Activated CD4-positive, alpha-beta T cell treated with anti-CD3 and anti-CD28 coated beads, Interleukin-2, amount 10 ng/mL, durations not matched to agents 24 days and 14 days (primary cell): ENCODE measurements at regions of chrX and their contacts with region 1.

Region 1: DNA sequence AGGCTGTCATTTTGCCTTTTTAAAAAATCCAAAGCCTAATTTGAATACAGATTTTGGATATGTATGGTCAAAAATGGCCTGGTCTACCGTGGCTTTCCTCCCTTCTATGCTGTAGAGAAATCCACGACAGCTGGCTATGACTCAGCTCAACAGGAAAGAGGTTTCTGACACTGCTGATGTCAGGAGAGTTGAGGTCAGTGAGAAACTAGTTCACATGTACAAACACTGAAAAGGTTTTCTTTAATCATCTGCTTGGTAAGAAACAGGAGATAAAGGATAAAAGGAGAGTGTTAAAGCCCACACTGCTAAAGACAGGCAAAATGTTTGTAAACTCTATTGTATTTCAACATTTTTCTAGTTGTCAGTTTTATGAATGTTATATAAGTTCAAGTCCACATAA is 113.9 kb downstream of the NYX start:
- DNase-seq: peak; percentile 78
- H3K4me3 Mint-ChIP-seq: peak overlapping the region; percentile 8
- H3K27ac Mint-ChIP-seq: peak overlapping the region; percentile 64
- H3K4me1 Mint-ChIP-seq: peaks cover 26% of the 10 kb centered on the region
- H3K27me3 Mint-ChIP-seq: no peaks in the 10 kb centered on the region

Region 2: GRCh38 chrX:41512394-41512793 is 48.7 kb before region 1 on chrX:
- intact Hi-C with region 1: loop called (anchors 5 kb)
- DNase-seq: peak; percentile 77
- H3K4me3 Mint-ChIP-seq: peak overlapping the region; percentile 38
- H3K27ac Mint-ChIP-seq: peak overlapping the region; percentile 80
- H3K4me1 Mint-ChIP-seq: peaks cover 22% of the 10 kb centered on the region
- H3K27me3 Mint-ChIP-seq: no peaks in the 10 kb centered on the region

Region 3: DNA sequence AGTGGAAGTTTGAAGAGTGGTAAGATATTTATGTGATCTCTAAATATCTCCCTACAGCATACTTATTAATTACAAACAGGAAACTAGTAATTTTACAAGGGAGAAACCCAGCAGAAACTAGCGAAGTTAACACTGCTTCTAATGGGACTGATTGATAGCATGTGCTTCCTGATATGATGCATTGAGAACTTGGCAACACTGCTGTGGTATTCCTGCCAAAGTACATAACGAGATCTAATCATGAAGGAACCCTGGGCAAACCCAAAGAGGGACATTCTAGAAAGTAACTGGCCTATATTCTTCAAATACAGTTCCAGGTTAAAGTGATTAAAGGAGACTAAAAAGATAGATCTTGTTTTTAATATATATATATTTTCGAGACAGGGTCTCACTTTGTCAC is 123.1 kb after region 1 on chrX:
- intact Hi-C with region 1: no loop called
- DNase-seq: no peak
- H3K4me3 Mint-ChIP-seq: no peak overlapping the region
- H3K27ac Mint-ChIP-seq: no peak overlapping the region
- H3K4me1 Mint-ChIP-seq: peaks cover 13% of the 10 kb centered on the region
- H3K27me3 Mint-ChIP-seq: no peaks in the 10 kb centered on the region

Region 4: GRCh38 chrX:41734530-41734929 is 173.5 kb after region 1 on chrX:
- intact Hi-C with region 1: loop called (anchors 1 kb)
- DNase-seq: peak; percentile 58
- H3K4me3 Mint-ChIP-seq: peak overlapping the region; percentile 34
- H3K27ac Mint-ChIP-seq: peak overlapping the region; percentile 85
- H3K4me1 Mint-ChIP-seq: peaks cover 25% of the 10 kb centered on the region
- H3K27me3 Mint-ChIP-seq: no peaks in the 10 kb centered on the region

Region 5: GRCh38 chrX:41759817-41760216 is 198.8 kb after region 1 on chrX:
- intact Hi-C with region 1: loop called (anchors 1 kb)
- DNase-seq: peak; percentile 64
- H3K4me3 Mint-ChIP-seq: no peak overlapping the region
- H3K27ac Mint-ChIP-seq: no peak overlapping the region
- H3K4me1 Mint-ChIP-seq: peaks cover 3% of the 10 kb centered on the region
- H3K27me3 Mint-ChIP-seq: no peaks in the 10 kb centered on the region

Region 6: GRCh38 chrX:42943051-42943974 is 1382.3 kb after region 1 on chrX:
- intact Hi-C with region 1: loop called (anchors 10 kb)
- DNase-seq: peak; percentile 78
- H3K4me3 Mint-ChIP-seq: peak overlapping the region; percentile 64
- H3K27ac Mint-ChIP-seq: peak overlapping the region; percentile 90
- H3K4me1 Mint-ChIP-seq: peaks cover 52% of the 10 kb centered on the region
- H3K27me3 Mint-ChIP-seq: no peaks in the 10 kb centered on the region